HEK293 (cell line): ENCODE measurements at regions of chr11 and their contacts with region 1.

Region 1: GRCh38 chr11:61733120-61733978 is 19.1 kb upstream of the MYRF start:
- H3K4me3 ChIP-seq: no peak overlapping the region
- H3K27ac ChIP-seq: no peak overlapping the region
- H3K4me1 ChIP-seq: no peaks in the 10 kb centered on the region
- CTCF ChIP-seq: peak; percentile 81

Region 2: DNA sequence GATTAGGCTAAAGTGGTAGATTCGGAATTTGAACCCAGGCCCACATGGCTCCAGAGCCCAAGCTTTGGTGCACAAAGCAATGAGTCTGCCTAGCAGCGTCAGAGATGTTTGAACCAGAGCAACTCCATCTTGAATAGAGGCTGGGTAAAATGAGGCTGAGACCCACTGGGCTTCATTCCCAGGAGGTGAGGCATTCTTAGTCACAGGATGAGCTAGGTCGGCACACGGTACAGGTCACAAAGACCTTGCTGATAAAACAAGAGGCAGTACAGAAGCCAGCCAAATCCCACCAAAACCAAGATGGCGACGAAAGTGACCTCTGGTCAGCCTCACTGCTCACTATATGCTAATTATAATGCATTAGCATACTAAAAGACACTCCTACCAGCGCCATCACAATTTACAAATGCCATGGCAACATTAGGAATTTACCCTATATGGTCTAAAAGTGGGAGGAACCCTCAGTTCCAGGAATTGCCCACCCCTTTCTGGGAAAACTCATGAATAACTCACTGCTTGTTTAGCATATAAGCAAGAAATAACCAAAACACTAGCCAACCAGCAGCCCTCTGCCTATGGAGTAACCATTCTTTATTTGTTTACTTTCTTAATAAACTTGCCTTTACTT is 93.4 kb before region 1 on chr11:
- CTCF ChIA-PET with region 1: interaction called, 39 read pairs
- POLR2A ChIA-PET with region 1: interaction called, 3 read pairs
- H3K4me3 ChIP-seq: no peak overlapping the region
- H3K27ac ChIP-seq: no peak overlapping the region
- H3K4me1 ChIP-seq: no peaks in the 10 kb centered on the region
- CTCF ChIP-seq: no peak

Region 3: DNA sequence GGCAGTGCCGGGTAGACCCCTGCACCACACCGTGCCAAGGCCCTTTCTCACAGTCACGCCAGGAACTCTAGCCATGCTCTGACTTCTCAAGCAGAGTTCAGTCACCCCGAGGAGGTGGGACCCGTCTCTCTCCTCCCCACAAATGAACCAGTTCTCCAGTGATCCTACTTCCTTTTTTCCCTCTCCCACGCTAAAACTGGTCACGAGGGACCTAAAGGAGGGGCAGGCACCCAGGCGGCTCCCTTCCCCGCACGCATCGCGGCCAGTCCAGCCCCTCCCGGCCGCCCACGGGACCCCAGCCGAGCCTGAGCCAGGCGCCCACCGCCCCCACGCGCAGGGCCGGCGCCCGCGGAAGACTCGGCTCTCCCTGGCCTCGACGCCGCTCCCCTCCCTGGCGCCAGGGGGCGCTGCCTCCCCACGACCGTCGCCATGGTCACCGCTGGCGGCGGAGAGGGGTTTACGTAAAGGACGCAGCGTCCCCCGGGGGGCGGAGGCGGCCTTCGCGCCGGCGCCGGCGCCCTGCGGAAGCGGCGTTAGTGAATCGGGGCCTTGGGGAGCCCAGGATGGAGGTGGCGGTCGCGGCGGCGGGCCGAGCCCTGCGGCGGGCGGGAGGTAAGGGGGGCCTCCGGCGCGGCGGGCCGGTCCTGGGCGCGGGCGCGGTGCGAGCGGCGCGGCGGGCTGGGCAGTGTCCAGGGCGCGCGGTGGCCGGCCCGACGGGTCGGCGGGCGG is 53.3 kb before region 1 on chr11 and contains the start of gene DAGLA:
- CTCF ChIA-PET with region 1: interaction called, 19 read pairs
- POLR2A ChIA-PET with region 1: no interaction called
- H3K4me3 ChIP-seq: peak within 1 kb of the TSS; percentile 49
- H3K27ac ChIP-seq: no peak within 1 kb of the TSS; the same call in 1 of the 2 replicates
- H3K4me1 ChIP-seq: peaks cover 3% of the 10 kb centered on the region; the same call in 1 of the 2 replicates
- CTCF ChIP-seq: peak; percentile 63; the same call in 1 of the 2 replicates

Region 4: DNA sequence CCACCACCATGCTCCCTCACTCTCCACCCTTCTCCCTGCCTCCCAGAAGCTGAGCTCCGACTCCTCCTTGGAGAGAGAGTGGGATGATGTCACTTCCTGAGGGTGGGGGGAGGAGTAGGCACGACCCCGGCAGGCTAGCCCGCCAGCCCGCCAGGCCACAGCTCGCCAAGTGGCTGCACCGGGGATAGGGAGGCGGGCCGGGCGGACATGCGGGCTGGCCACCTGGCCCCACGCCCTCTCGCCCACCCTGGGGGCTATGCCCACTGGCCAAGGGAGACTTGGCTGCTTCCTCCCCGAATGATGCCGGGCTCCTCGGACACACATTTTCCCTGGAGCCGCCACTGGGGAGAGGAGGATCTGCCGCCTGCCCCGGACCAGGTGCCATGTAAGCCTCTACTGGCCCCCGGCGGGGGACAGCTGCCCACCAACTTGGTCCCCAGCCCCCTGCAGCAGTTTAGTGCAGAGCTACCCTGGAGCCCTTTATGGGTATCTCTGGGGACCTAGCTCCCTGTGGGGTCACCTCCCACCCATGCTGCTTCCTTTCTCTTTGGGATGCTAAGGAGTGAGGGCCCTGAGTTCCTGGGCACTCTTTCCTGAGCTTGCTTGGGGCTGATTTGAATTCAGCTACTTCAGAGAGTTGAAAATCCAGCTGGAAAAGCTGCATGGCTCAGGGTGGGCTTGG is 14.6 kb before region 1 on chr11:
- CTCF ChIA-PET with region 1: interaction called, 19 read pairs
- POLR2A ChIA-PET with region 1: interaction called, 16 read pairs
- H3K4me3 ChIP-seq: peak overlapping the region; percentile 45
- H3K27ac ChIP-seq: peak overlapping the region; percentile 64; the same call in 1 of the 2 replicates
- H3K4me1 ChIP-seq: no peaks in the 10 kb centered on the region; the same call in 1 of the 2 replicates
- CTCF ChIP-seq: peak; percentile 64

Region 5: DNA sequence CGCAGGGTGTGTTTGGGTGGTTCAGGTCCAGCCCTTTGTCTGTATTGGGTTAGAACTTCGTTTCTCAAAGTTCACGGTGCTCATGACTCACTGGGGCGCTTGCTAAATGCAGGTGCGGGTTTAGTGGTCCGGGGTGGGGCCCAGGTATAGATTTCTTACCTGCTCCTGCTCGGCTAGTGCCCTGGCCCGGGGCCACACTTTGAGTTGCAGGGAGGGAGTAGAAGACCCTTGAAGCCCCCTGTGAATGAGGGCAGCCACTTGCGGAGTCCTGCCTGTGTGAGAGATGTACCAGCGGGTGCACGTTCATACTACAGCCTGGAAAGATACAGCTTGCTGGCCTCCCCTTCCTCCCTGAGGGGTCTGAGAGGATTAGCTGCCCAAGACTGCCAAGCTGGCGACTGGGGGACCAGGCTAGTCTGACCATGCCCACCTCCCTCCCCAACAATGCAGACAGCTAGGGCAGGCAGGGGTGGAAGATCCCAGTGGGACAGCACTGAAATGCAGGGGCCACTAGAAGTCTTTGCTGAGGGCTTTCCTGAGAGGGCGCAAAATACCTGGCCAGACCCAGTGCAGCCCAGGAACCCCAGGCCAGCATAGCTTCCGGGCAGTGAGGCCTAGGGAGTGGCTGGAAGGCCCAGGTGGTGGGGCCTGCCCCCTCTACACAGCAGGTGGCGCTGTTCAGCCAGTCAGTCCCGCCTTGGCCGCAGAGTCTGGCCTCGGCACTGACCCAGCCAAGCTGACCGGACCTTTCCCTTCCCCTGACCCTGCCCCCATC is 14.0 kb after region 1 on chr11:
- CTCF ChIA-PET with region 1: interaction called, 42 read pairs
- POLR2A ChIA-PET with region 1: no interaction called
- H3K4me3 ChIP-seq: no peak overlapping the region
- H3K27ac ChIP-seq: no peak overlapping the region
- H3K4me1 ChIP-seq: no peaks in the 10 kb centered on the region
- CTCF ChIP-seq: peak; percentile 63

Region 6: GRCh38 chr11:61769169-61769920 is 36.0 kb after region 1 on chr11:
- CTCF ChIA-PET with region 1: no interaction called
- POLR2A ChIA-PET with region 1: no interaction called
- H3K4me3 ChIP-seq: no peak overlapping the region
- H3K27ac ChIP-seq: no peak overlapping the region
- H3K4me1 ChIP-seq: no peaks in the 10 kb centered on the region
- CTCF ChIP-seq: no peak

Region 7: DNA sequence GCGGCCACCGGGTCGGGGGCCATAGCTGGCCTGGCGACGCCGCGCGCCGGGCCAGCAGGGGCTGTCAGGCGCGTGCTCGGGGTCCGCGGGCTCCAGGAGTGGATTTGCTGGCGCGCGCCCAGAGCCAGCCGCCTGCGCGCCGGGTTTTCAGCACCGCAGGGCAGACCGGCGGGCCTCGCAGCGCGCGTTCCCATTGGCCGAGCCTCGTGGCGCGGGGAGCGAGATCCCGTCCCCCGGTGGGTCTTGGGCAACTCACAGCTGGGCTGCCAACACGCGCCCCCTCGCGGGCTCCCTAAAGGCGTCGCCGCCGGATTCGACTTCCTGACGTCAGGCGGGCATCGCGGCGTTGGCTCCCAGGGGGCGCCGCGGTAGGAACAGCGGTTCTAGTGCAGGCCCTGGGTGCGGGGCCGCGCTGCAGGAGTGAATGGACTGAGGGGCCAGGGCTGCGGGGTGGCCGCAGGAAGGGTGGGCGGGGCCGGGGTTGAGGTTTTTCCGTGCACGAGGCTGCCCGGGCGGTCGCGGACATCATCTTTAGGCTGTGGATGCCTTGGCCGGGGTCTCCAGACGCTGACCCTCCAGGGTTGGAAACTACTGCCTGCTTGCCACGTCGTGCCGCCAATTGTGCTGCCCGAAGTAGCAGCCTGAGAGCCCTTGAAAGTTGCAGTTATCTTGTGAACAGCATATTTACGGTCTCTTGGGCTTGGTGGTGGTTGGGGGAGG is 83.5 kb after region 1 on chr11 and contains the start of gene FADS1:
- CTCF ChIA-PET with region 1: no interaction called
- POLR2A ChIA-PET with region 1: no interaction called
- H3K4me3 ChIP-seq: peak within 1 kb of the TSS; percentile 64
- H3K27ac ChIP-seq: peak within 1 kb of the TSS; percentile 76
- H3K4me1 ChIP-seq: no peaks in the 10 kb centered on the region
- CTCF ChIP-seq: peak; percentile 95